A549 (cell line): ENCODE measurements at regions of chr11 and their contacts with region 1.

Region 1: DNA sequence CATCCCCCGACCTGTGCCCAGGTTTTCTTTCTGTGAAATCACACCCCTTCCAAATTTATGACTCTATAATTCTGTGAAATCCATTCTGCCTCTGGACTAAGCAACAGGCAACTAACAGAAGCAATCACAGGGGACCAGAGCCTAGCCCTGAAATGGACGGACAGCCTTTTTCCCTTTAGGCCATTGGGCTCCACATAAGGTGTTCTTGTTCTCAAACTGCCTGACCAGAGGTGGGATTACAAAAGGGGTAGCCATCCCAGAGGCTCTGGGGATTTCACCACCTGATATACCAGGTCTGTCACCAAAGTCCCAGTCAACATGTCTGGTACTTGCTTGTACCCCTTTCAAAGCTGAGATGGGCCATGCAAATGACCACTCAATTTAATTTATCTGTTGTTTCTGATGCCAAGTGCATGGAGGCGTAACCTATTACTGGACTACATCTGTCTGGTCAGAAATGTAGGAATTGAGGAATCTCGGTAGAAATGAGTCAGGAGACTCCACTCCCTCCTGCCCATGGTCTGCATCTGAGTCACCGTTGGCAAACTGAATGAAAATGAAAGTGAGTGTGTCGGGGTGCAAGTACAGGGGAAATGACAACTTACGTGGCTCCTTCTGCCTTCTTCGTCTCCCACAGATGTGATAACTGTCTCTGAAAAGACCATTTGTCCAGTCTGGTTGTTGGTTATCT is 10.2 kb downstream of the DKK3 start:
- DNase-seq: peak; percentile 62 to 79
- ATAC-seq: peak; percentile 77 to 82
- H3K4me3 ChIP-seq: peak overlapping the region; percentile 22; the same call in 1 of the 3 replicates
- H3K27ac ChIP-seq: peak overlapping the region; percentile 47 to 77; a peak in 5 of 6 replicates
- H3K4me1 ChIP-seq: peaks cover 32% of the 10 kb centered on the region
- CTCF ChIP-seq: no peak
- EP300 ChIP-seq: no peak
- POLR2A ChIP-seq: no peak
- RAD21 ChIP-seq: no peak

Region 2: GRCh38 chr11:11987503-11988022 is 10.7 kb before region 1 on chr11:
- CTCF ChIA-PET with region 1: interaction called, 10 read pairs
- POLR2A ChIA-PET with region 1: no interaction called
- DNase-seq: peak in 1 of 2 experiments; percentile 66
- ATAC-seq: peak; percentile 9 to 40; a peak in 3 of 6 replicates
- H3K4me3 ChIP-seq: no peak overlapping the region
- H3K27ac ChIP-seq: peak overlapping the region; percentile 80 to 86
- H3K4me1 ChIP-seq: peaks cover 61% of the 10 kb centered on the region
- CTCF ChIP-seq: peak; percentile 23; the same call in 1 of the 3 replicates
- EP300 ChIP-seq: no peak
- POLR2A ChIP-seq: no peak
- RAD21 ChIP-seq: 0 out of 5 replicates have a peak, but pooled peaks of 1 of the 2 experiments have one; percentile 19